ENCODE measurements at regions of chr11 and their contacts with region 1.

Region 1: DNA sequence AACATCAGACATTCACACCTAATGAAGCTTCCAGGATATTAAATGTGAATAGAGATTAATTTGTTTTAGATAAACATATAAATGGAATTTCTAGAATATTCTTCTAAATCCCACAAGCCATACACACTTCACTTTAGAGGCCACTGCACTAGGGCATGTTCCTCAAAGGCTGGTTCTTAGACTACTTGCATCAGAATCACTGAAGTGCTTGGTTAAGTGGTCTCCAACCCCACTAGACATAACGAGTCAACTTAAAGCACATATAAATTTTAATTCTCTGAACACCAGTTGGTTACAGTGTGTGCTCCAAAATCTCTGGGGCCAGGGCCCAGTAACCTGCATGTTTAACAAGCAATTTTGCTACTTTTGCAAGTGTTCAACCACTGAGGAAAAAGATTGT is 7.9 kb upstream of the ALKBH8 start:
- DNase-seq: no peak
- ATAC-seq: no peak
- H3K4me3 ChIP-seq: no peak overlapping the region
- H3K27ac ChIP-seq: no peak overlapping the region
- H3K4me1 ChIP-seq: no peaks in the 10 kb centered on the region
- H3K27me3 ChIP-seq: no peaks in the 10 kb centered on the region
- CTCF ChIP-seq: no peak
- POLR2A ChIP-seq: no peak

Region 2: DNA sequence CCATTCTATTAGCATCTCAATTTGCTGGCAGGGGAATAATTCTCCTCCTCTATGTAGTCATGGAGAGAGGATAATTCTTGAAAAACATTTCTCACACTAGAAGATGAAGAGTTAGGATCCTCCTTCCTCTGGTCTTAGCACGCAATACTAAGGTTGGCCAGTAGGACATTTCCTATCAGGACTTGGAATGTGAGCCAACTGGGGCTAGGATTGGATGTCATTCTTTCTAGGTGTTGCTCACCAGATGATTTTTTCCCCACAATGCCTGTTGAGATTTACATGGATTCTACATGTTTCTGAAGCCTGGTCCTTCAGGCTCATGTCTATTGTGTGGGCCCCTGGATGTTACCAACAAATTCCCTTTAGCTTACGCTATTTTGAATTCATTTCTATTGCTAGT is 110.4 kb after region 1 on chr11:
- in situ Hi-C with region 1: loop called in 2 of 4 experiments (anchors 5 to 10 kb)
- intact Hi-C with region 1: loop called (anchors 1 kb)
- DNase-seq: no peak
- ATAC-seq: no peak
- H3K4me3 ChIP-seq: no peak overlapping the region
- H3K27ac ChIP-seq: no peak overlapping the region
- H3K4me1 ChIP-seq: no peaks in the 10 kb centered on the region
- H3K27me3 ChIP-seq: no peaks in the 10 kb centered on the region
- CTCF ChIP-seq: no peak
- POLR2A ChIP-seq: no peak

Region 3: DNA sequence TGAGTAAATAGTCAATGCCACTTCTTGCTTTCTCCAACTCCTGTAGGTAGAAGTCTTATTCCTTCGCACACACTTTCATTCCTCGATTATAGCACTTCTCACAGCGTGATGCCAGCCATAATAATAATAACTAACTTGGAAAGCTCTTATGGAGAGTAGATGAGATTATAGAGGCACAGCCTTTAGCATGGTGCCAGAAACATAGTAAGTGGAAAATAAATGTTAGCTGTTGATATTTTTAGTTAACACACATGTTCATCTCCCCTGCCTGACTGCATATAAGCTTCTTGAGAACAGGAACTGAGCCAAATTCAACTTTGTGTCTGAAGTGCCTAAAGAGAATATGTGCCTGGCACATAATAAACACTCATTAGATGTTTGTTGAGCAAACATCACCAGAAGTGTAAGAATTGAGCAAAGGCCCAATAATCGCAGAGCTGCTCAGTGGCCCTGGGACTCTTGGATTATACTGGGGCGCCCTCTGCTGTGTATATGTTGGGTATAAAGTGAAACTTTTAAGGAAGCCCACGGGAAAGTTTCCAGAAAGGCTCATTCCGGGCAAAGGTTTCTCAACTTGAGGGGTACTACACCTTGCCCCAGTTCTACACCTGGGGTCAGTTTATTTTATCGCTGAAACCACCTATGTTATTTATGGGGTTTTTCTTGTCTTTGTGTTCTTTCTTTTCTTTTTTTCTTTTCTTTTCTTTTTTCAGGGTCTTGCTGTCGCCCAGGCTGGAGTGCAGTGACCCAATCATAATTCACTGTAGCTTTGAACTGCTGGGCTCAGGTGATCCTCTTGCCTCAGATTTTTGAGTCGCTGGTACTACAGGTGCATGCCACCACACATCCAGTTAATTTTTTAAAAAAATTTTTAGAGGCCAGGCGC is 116.1 kb after region 1 on chr11:
- in situ Hi-C with region 1: loop called (anchors 5 to 10 kb)
- intact Hi-C with region 1: loop called (anchors 1 kb)
- DNase-seq: peak; percentile 53 to 56
- ATAC-seq: peak; percentile 79 to 89
- H3K4me3 ChIP-seq: peak overlapping the region in 3 of 4 donors; percentile 9 to 19 (median 13)
- H3K27ac ChIP-seq: peak overlapping the region; percentile 13 to 33 (median 28)
- H3K4me1 ChIP-seq: peaks cover 0 to 3% of the 10 kb centered on the region in 2 donors
- H3K27me3 ChIP-seq: no peaks in the 10 kb centered on the region
- CTCF ChIP-seq: peak; percentile 49 to 74 (median 67)
- POLR2A ChIP-seq: no peak

Region 4: DNA sequence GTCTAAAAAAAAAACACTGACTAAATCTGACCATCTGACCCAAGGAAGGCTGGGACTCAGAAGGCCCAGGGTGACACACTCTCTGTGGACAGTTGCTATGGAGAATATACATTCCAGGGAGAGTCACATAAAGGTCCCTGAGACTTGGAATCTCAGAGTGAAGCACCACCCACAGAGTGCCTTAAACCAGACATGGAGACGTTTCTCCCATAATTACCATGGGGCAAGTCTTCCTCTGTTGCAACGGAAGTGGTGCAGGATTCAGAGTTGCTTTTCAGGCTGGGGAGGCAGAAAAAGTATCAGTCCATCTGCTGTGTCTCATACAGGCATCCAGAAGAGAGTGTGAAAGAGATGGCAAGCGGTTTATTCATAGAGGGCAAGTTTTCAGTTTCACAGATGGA is 197.1 kb after region 1 on chr11:
- in situ Hi-C with region 1: loop called in 3 of 4 experiments (anchors 5 to 10 kb)
- intact Hi-C with region 1: loop called (anchors 1 kb)
- DNase-seq: no peak
- ATAC-seq: peak; percentile 51 to 66
- H3K4me3 ChIP-seq: no peak overlapping the region
- H3K27ac ChIP-seq: peak overlapping the region; percentile 68 to 78 (median 72)
- H3K4me1 ChIP-seq: peaks cover 21 to 29% of the 10 kb centered on the region in 2 donors
- H3K27me3 ChIP-seq: no peaks in the 10 kb centered on the region
- CTCF ChIP-seq: no peak
- POLR2A ChIP-seq: no peak

Measured in gastrocnemius medialis (tissue), 4 donors.